ENCODE measurements at regions of chr6 and their contacts with region 1.

Region 1: GRCh38 chr6:43667245-43668150 is 20.1 kb downstream of the MRPS18A start:
- DNase-seq: peak; percentile 74
- H3K27ac ChIP-seq: peak overlapping the region; percentile 77
- CTCF ChIP-seq: peak; percentile 95

Region 2: DNA sequence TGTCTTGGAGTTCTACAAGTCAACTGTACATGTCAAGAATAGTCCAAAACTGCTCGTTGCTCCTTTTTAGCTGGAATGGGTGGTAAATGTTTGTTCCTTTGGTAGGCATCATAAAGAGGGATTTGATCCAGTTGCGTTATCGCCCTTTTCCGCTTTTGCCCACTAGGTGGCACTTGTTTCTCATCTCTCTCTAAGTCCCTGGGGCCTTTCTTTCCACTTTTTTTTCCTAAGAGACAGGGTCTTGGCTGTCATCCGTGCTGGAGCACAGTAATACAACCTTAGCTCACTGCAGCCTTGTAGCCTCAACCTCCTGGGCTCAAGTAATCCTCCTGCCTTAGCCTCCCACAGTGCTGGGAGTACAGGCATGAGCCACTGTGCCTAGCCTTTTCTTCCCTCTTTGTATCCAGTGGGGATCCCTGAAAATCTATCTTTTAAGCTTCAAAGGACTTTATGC is 59.2 kb before region 1 on chr6:
- CTCF ChIA-PET with region 1: no interaction called
- POLR2A ChIA-PET with region 1: no interaction called
- DNase-seq: peak; percentile 56
- H3K27ac ChIP-seq: no peak overlapping the region
- CTCF ChIP-seq: peak; percentile 87

Region 3: GRCh38 chr6:43762966-43763695 is 95.6 kb after region 1 on chr6:
- CTCF ChIA-PET with region 1: interaction called, 19 read pairs
- POLR2A ChIA-PET with region 1: no interaction called
- DNase-seq: no peak
- H3K27ac ChIP-seq: no peak overlapping the region
- CTCF ChIP-seq: no peak

Region 4: GRCh38 chr6:43769526-43770416 is 102.3 kb after region 1 on chr6 and contains the start of gene VEGFA:
- CTCF ChIA-PET with region 1: interaction called, 33 read pairs
- POLR2A ChIA-PET with region 1: interaction called, 7 read pairs
- DNase-seq: peak; percentile 98
- H3K27ac ChIP-seq: peak within 1 kb of the TSS; percentile 93
- CTCF ChIP-seq: peak; percentile 98

Region 5: GRCh38 chr6:43774776-43775534 is 107.5 kb after region 1 on chr6:
- CTCF ChIA-PET with region 1: interaction called, 33 read pairs
- POLR2A ChIA-PET with region 1: interaction called, 7 read pairs
- DNase-seq: peak; percentile 93
- H3K27ac ChIP-seq: peak overlapping the region; percentile 93
- CTCF ChIP-seq: peak; percentile 88

Region 6: GRCh38 chr6:44074439-44075136 is 407.1 kb after region 1 on chr6:
- CTCF ChIA-PET with region 1: interaction called, 28 read pairs
- POLR2A ChIA-PET with region 1: no interaction called
- DNase-seq: no peak
- H3K27ac ChIP-seq: peak overlapping the region; percentile 65
- CTCF ChIP-seq: peak; percentile 90

Measured in RWPE1 (cell line).